Right ventricle myocardium superior (tissue), 1 donor: ENCODE measurements at regions of chr12 and their contacts with region 1.

Region 1: GRCh38 chr12:2944401-2945047 is 14.7 kb upstream of the TEAD4 start:
- DNase-seq: peak; percentile 57
- ATAC-seq: peak; percentile 87

Region 2: DNA sequence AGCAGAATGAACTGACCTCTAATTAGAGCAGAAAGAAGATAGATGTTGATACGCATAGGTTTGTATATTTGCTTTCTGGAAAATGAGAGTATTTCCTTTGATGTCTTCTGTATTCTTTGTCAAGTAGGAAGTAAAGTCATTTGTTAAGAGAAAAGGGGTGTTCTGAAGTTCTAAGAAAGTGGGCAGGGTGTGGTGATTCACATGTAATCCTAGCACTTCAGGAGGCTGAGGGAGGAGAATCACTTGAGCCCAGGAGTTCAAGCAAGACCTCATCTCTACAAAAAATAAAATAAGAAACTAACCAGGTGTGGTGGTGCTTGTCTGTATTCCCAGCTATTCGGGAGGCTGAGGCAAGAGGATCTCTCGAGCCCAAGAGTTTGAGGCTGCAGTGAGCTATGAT is 64.7 kb before region 1 on chr12:
- intact Hi-C with region 1: loop called (anchors 10 kb)
- DNase-seq: no peak
- ATAC-seq: no peak

Region 3: GRCh38 chr12:2902272-2902880 is 42.1 kb before region 1 on chr12:
- intact Hi-C with region 1: no loop called
- DNase-seq: no peak
- ATAC-seq: peak; percentile 96